CD4-positive, alpha-beta memory T cell (primary cell): ENCODE measurements at regions of chr20 and their contacts with region 1.

Region 1: GRCh38 chr20:5056801-5057599 is 55.7 kb upstream of the SLC23A2 start:
- DNase-seq: peak; percentile 69 to 78 (median 73)
- H3K4me3 ChIP-seq: no peak overlapping the region
- H3K4me3 Mint-ChIP-seq: peak overlapping the region in 7 of 8 donors; percentile 6 to 69 (median 46)
- H3K27ac ChIP-seq: no peak overlapping the region
- H3K27ac Mint-ChIP-seq: peak overlapping the region; percentile 48 to 96 (median 81)
- H3K4me1 ChIP-seq: peaks cover 19% of the 10 kb centered on the region
- H3K4me1 Mint-ChIP-seq: peaks cover 13 to 24% (median 20%) of the 10 kb centered on the region in 4 donors
- H3K27me3 ChIP-seq: no peaks in the 10 kb centered on the region
- H3K27me3 Mint-ChIP-seq: no peaks in the 10 kb centered on the region

Region 2: DNA sequence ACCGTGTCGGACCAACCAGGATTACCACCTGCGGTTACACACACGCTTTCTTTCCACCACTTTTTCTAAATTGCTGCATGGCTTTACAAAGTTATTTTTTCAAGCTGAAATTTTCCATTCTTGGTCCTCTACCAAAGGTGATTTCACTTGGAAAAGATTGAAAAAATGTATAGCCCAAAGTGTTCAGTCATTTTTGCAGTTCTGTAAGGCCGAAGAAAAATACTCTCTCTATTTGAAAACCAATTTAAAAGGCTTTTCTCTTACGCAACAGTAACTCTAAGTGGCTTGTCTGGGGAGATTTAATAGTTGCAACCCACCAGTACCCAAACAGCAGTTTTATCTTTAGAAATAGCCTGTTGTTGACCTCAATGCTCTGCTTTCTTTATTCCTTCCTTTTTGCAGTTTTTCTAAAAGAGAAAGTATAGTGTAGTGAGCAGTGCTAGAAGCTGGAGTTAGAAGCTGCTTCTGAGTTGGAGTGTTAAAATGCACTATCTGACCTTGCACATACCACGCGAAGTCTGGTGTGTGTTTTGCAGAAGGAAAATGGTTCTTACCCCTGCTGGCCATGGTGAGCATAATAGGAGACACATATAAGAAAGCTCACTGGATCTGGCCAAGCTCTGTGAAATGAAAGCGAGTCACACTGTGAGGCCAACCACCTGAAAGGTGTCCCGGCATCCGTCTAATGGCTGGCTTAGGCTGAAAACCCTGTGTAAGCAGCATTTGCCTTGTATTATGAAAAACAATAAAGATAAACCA is 606.9 kb before region 1 on chr20:
- CTCF ChIA-PET with region 1: no interaction called
- POLR2A ChIA-PET with region 1: no interaction called
- intact Hi-C with region 1: no loop called
- DNase-seq: no peak
- H3K4me3 ChIP-seq: no peak overlapping the region
- H3K4me3 Mint-ChIP-seq: no peak overlapping the region
- H3K27ac ChIP-seq: no peak overlapping the region
- H3K27ac Mint-ChIP-seq: no peak overlapping the region
- H3K4me1 ChIP-seq: no peaks in the 10 kb centered on the region
- H3K4me1 Mint-ChIP-seq: no peaks in the 10 kb centered on the region
- H3K27me3 ChIP-seq: no peaks in the 10 kb centered on the region
- H3K27me3 Mint-ChIP-seq: peaks cover 1 to 4% of the 10 kb centered on the region in 2 donors

Region 3: DNA sequence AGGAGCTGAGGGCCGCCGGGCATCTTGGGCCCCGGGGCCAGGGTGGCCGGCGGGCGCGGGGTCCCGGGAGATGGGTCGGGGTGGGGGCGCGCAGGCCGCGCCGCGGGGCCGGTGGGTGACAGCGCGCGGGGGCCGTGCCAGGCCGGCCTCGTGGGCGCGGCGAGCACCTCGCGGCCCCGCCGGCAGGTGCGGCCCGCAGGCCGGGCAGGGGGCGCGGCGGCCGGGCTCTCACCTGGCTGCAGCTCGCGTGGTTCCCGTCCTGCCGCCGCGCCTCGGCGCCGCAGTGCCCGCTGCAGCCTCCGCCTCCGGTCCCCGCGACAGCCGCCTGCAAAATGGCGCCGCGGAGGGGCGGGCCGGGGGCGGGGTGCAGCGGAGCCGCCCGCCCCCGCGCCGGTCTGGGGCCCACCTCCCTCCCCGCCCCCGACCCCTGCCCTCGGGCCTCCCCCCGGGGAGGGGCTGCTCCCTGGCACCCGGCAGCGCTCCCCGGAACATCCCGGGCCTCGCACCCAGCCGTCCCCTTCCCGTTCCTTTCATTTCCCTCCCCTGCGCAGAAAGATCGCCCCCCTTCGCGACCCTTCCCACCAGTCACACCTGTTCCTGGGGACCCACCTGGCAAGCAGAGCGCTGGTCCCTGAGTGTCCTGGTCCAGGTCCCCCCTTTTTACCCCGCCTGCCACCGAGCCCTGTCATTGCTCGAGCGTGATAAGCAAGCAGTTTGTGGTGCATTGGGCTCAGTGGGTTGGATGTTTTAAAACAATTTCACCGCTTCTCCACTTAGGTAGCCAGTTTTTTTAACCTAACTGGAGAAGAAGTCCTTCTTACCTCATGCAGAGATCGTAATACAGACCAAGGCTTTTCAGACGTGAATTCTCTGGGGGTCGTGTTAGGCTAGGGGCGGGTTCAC is 55.6 kb before region 1 on chr20 and contains the start of gene SLC23A2:
- CTCF ChIA-PET with region 1: interaction called, 5 read pairs
- POLR2A ChIA-PET with region 1: interaction called, 4 read pairs
- intact Hi-C with region 1: loop called (anchors 2 kb)
- DNase-seq: peak; percentile 50 to 65 (median 58)
- H3K4me3 ChIP-seq: peak within 1 kb of the TSS; percentile 71 to 87
- H3K4me3 Mint-ChIP-seq: peak within 1 kb of the TSS; percentile 91 to 100 (median 94)
- H3K27ac ChIP-seq: peak within 1 kb of the TSS; percentile 56
- H3K27ac Mint-ChIP-seq: peak within 1 kb of the TSS; percentile 87 to 94 (median 93)
- H3K4me1 ChIP-seq: peaks cover 33% of the 10 kb centered on the region
- H3K4me1 Mint-ChIP-seq: peaks cover 30 to 47% (median 36%) of the 10 kb centered on the region in 4 donors
- H3K27me3 ChIP-seq: no peaks in the 10 kb centered on the region
- H3K27me3 Mint-ChIP-seq: no peaks in the 10 kb centered on the region
- total RNA-seq, gene SLC23A2: 22.3 to 22.6 TPM

Region 4: GRCh38 chr20:5078399-5078958 is 21.5 kb after region 1 on chr20:
- CTCF ChIA-PET with region 1: interaction called, 10 read pairs
- POLR2A ChIA-PET with region 1: interaction called, 9 read pairs
- intact Hi-C with region 1: loop called (anchors 1 kb)
- DNase-seq: peak; percentile 75 to 89 (median 81)
- H3K4me3 ChIP-seq: peak overlapping the region; percentile 44 to 59
- H3K4me3 Mint-ChIP-seq: peak overlapping the region; percentile 78 to 94 (median 84)
- H3K27ac ChIP-seq: peak overlapping the region; percentile 89
- H3K27ac Mint-ChIP-seq: peak overlapping the region; percentile 91 to 100 (median 98)
- H3K4me1 ChIP-seq: peaks cover 27% of the 10 kb centered on the region
- H3K4me1 Mint-ChIP-seq: peaks cover 15 to 31% (median 22%) of the 10 kb centered on the region in 4 donors
- H3K27me3 ChIP-seq: no peaks in the 10 kb centered on the region
- H3K27me3 Mint-ChIP-seq: no peaks in the 10 kb centered on the region

Region 5: DNA sequence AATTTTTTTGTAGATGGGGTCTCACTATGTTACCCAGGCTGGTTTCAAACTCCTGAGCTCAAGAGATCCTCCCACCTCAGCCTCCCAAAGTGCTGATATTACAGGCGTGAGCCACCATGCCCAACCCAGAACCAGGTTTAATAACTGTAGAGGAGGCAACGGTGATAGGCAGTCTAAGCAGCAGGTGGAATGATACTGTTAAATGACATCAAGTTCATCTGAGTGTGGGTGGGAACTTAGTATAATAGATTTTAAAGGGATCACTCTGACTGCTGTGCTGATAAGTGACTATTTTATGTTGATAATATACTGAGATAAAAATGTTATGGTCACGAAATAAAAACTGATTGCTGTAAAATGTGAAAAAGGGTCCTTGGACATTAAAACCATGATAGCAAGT is 31.7 kb after region 1 on chr20:
- CTCF ChIA-PET with region 1: interaction called, 18 read pairs
- POLR2A ChIA-PET with region 1: no interaction called
- intact Hi-C with region 1: no loop called
- DNase-seq: no peak
- H3K4me3 ChIP-seq: no peak overlapping the region
- H3K4me3 Mint-ChIP-seq: no peak overlapping the region
- H3K27ac ChIP-seq: no peak overlapping the region
- H3K27ac Mint-ChIP-seq: peak overlapping the region in 3 of 7 donors; percentile 25 to 42 (median 35)
- H3K4me1 ChIP-seq: peaks cover 10% of the 10 kb centered on the region
- H3K4me1 Mint-ChIP-seq: peaks cover 8 to 18% (median 10%) of the 10 kb centered on the region in 4 donors
- H3K27me3 ChIP-seq: no peaks in the 10 kb centered on the region
- H3K27me3 Mint-ChIP-seq: no peaks in the 10 kb centered on the region